ENCODE measurements at regions of chr2 and their contacts with region 1.

Region 1: DNA sequence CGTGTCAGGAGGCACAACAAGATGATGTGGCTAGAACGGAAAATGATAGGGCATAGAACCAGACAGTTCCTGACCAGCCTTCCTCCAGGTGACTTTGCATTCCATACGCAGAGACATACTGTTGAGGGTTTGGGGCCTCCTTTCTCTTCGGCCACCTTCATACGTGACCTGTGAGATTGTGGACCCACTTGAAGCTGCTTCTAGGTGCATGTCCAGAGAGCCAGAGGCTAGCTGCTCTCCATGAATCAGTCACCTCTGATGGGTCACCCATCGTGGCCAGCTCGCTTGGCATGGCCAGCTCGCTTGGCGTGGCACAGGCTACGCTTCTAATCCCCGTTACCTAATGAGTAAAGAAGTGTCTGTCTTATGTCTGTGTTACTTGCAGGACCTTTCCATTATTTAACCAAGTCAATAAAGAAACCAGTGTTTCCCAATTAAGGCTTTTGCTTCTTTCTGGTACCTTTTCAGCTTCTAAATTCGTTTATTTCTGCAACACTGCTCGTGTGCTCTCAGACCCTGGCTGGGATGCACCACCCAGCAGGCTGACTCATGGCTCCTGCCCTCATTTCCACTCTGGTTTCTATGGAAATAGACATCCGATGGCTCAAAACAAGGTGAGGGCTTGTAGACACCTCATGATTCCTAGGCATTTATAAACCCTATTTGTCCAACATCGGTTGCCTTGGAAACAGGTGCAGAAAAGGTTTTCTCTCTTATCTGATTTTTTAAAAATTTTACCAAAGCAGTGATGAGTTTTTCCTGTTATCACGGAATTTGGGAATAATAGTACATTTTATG is 86.7 kb upstream of the B3GNT7 start:
- DNase-seq: no peak
- H3K4me3 ChIP-seq: no peak overlapping the region
- H3K4me3 Mint-ChIP-seq: no peak overlapping the region
- H3K27ac ChIP-seq: no peak overlapping the region
- H3K27ac Mint-ChIP-seq: no peak overlapping the region
- H3K4me1 ChIP-seq: peaks cover 0 to 6% of the 10 kb centered on the region in 2 donors
- H3K4me1 Mint-ChIP-seq: peaks cover 10% of the 10 kb centered on the region
- H3K27me3 ChIP-seq: no peaks in the 10 kb centered on the region
- H3K27me3 Mint-ChIP-seq: peaks cover 0 to 4% (median 1%) of the 10 kb centered on the region in 3 donors
- CTCF ChIP-seq: no peak

Region 2: GRCh38 chr2:231238689-231239088 is 70.1 kb before region 1 on chr2:
- intact Hi-C with region 1: no loop called
- DNase-seq: no peak
- H3K4me3 ChIP-seq: no peak overlapping the region
- H3K4me3 Mint-ChIP-seq: no peak overlapping the region
- H3K27ac ChIP-seq: no peak overlapping the region
- H3K27ac Mint-ChIP-seq: no peak overlapping the region
- H3K4me1 ChIP-seq: peaks cover 15 to 17% of the 10 kb centered on the region in 2 donors
- H3K4me1 Mint-ChIP-seq: peaks cover 14% of the 10 kb centered on the region
- H3K27me3 ChIP-seq: no peaks in the 10 kb centered on the region
- H3K27me3 Mint-ChIP-seq: peaks cover 0 to 2% (median 1%) of the 10 kb centered on the region in 3 donors
- CTCF ChIP-seq: no peak

Region 3: DNA sequence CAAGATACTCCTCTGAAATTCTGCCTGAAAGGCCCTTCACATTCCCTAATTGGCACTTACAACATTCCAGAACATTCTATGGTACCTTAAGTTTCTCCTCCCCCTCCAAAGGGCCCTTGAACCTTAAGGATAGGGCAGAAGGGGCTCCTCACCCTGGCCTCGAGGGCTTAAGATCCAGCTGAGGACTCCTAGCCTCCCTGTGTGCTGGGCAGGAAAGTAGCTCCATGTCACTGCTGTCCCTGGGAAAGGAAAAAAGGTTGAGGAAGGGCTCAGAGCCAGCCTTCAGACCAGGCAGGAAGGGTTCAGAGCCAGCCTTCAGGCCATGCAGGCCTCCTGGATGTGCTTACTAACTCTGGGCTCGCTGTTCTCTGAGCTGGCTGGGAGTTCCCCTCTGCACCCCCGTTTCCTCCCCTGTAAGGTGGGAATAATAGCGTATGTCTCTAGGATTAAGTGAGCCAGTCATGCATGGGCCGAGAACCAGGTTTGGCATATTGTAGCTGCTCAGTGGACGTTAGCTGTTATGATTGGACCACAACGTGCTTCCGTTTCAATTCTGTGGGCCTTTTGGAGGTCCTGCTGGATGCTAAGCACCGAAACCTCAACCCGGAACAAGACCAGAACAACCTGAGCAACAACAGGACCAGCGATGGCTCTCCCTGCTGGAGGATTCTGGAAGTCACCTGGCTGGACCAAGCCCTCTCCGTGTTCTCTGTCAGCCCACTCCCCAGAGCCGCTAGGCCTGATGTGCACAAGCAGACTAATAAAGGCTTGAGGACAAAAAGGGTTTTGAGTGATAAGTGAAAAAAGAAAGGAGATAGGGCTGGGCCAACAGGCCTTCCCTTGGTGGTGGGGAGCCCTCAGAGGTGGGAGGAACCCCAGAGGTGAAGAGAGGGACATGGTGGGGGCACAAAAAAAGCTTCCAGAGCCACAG is 85.6 kb after region 1 on chr2:
- intact Hi-C with region 1: loop called in 1 of 2 experiments (anchors 5 kb)
- DNase-seq: no peak
- H3K4me3 ChIP-seq: no peak overlapping the region
- H3K4me3 Mint-ChIP-seq: peak overlapping the region; percentile 67 to 79
- H3K27ac ChIP-seq: no peak overlapping the region
- H3K27ac Mint-ChIP-seq: peak overlapping the region in 2 of 7 donors; percentile 11 to 46
- H3K4me1 ChIP-seq: peaks cover 50 to 61% of the 10 kb centered on the region in 2 donors
- H3K4me1 Mint-ChIP-seq: peaks cover 57% of the 10 kb centered on the region
- H3K27me3 ChIP-seq: peaks cover 0 to 10% of the 10 kb centered on the region in 2 donors
- H3K27me3 Mint-ChIP-seq: peaks cover 18 to 29% (median 26%) of the 10 kb centered on the region in 3 donors
- CTCF ChIP-seq: no peak

Measured in CD14-positive monocyte (primary cell).